Gastrocnemius medialis (tissue), 4 donors: ENCODE measurements at regions of chr3 and their contacts with region 1.

Region 1: DNA sequence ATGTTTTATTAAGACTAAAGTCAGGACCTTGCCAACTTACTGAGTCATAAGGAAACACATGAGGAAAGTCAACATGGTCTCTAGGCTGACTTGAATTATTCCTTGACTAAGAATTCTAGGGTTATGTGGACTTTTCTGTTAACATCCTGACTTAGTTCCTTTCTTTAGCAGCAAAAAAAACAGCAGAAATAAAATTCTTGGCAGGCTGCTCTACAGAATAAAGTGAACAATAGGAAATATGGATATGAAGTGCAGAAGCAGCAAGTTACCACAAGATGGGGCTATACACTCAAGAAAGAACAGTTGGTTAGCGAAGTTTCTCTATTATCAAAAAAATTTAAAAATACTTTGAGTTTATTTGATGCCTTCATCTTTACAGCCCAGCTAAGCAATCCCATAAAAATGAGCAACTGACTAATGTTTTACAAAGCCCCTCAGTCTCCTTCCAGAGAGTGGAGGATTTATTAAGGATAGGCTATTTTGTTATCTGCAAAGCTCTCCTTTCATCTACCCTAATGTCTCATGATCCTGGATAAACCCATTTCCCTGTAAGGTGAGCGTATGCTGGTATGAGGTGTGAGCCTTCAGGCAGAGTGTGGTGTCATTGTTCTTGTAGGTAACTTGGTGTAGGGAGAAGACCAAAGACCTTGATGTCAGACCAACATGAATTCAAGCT is 23.1 kb upstream of the MCCC1 start:
- DNase-seq: no peak
- ATAC-seq: peak; percentile 70 to 72
- H3K4me3 ChIP-seq: no peak overlapping the region
- H3K27ac ChIP-seq: no peak overlapping the region
- H3K4me1 ChIP-seq: peaks cover 0 to 2% of the 10 kb centered on the region in 2 donors
- H3K27me3 ChIP-seq: peaks cover 0 to 4% (median 0%) of the 10 kb centered on the region in 3 donors
- CTCF ChIP-seq: peak; percentile 77 to 85 (median 82)
- POLR2A ChIP-seq: no peak

Region 2: GRCh38 chr3:183178629-183179549 is 56.5 kb after region 1 on chr3:
- in situ Hi-C with region 1: loop called in 1 of 4 experiments (anchors 10 kb)
- intact Hi-C with region 1: loop called (anchors 5 kb)
- DNase-seq: no peak
- ATAC-seq: peak; percentile 27 to 43
- H3K4me3 ChIP-seq: peak overlapping the region; percentile 51 to 79 (median 60)
- H3K27ac ChIP-seq: no peak overlapping the region
- H3K4me1 ChIP-seq: peaks cover 6 to 9% of the 10 kb centered on the region in 2 donors
- H3K27me3 ChIP-seq: peaks cover 22 to 50% (median 32%) of the 10 kb centered on the region in 3 donors
- CTCF ChIP-seq: no peak
- POLR2A ChIP-seq: no peak

Region 3: GRCh38 chr3:183188895-183189462 is 66.6 kb after region 1 on chr3:
- in situ Hi-C with region 1: loop called in 1 of 4 experiments (anchors 10 kb)
- intact Hi-C with region 1: loop called (anchors 5 kb)
- DNase-seq: no peak
- ATAC-seq: peak in 1 of 2 donors; percentile 26
- H3K4me3 ChIP-seq: no peak overlapping the region
- H3K27ac ChIP-seq: no peak overlapping the region
- H3K4me1 ChIP-seq: no peaks in the 10 kb centered on the region
- H3K27me3 ChIP-seq: no peaks in the 10 kb centered on the region
- CTCF ChIP-seq: no peak
- POLR2A ChIP-seq: no peak